Mucosa of descending colon (tissue), 3 donors: ENCODE measurements at regions of chr12 and their contacts with region 1.

Region 1: DNA sequence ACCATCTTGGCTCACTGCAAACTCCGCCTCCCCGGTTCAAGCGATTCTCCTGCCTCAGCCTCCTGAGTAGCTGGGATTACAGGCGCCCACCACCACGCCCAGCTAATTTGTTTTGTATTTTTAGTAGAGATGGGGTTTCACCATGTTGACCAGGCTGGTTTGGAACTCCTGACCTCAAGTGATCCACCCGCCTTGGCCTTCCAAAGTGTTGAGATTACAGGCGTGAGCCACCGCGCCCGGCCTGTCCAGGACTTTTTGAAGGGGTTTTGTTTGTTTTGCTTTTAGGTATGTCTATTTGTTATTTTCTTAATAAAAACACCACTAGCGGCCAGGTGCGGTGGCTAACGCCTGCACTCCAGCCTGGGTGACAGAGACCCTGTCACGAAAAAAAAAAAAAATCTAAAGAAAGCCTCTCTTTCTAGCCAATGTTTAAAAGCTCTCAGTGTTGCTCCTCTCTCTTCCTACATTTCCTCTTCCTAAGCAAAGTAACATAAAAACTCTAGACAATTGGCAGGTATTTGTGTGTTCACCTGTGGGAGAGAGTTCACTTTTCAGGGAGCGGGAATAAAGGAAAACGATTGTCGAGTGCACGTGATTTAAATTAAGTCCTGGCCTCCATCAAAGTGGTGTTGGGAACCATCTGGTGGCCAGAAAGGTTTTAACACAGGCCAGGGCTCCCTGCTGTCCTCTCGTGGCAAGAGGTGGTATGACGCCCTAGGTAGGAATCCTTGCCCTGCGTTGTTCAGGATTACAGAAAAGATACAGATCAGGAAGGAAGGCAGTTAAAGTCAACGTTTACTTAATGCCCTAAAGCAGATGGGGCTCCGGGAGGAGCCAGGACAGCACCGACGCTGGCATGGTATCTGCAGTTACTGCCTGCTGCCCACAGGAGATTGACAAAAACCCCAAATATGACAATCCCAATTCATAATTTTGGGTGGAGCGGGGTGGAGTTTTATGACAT is 36.2 kb upstream of the ATP23 start:
- DNase-seq: peak; percentile 81 to 96 (median 93)
- ATAC-seq: peak; percentile 100
- H3K4me3 ChIP-seq: no peak overlapping the region
- H3K4me1 ChIP-seq: peaks cover 12% of the 10 kb centered on the region
- CTCF ChIP-seq: peak; percentile 99

Region 2: DNA sequence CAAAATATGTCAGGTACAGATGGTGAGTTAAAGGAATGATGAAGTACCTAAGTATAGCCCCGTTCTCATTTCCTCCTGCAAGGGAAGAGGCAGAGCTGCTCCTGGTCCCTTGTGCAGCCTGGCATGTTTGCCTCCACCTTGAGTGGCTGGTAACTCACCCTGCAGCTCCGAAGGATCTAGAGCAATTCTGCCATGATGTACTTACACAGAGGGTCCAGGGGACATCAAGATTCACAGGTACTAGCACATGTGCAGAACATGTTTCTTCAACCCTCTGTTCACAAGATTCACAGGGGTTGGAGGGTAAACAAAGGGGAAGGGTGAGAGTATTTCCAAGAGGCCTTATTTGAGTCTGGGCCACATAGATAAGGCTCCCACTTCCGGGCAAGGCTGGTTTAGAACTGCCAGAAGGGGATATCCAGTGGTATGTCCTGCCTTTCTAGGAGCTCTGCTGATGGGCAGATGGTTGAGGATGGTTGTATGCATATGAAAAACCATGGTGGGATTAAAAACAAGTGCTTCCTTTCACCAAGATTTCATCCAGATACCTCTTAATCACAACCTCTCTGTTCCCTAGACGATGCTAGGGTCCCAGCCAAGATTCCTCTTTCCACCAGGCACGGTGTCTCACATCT is 365.9 kb before region 1 on chr12:
- intact Hi-C with region 1: no loop called
- DNase-seq: no peak
- ATAC-seq: no peak
- H3K4me3 ChIP-seq: no peak overlapping the region
- H3K4me1 ChIP-seq: peaks cover 23% of the 10 kb centered on the region
- CTCF ChIP-seq: no peak

Region 3: GRCh38 chr12:57722716-57723629 is 182.2 kb before region 1 on chr12:
- intact Hi-C with region 1: no loop called
- DNase-seq: peak in 1 of 3 donors; percentile 26
- ATAC-seq: no peak
- H3K4me3 ChIP-seq: no peak overlapping the region
- H3K4me1 ChIP-seq: peaks cover 3% of the 10 kb centered on the region
- CTCF ChIP-seq: no peak

Region 4: GRCh38 chr12:57803319-57803893 is 101.7 kb before region 1 on chr12:
- intact Hi-C with region 1: loop called in 1 of 2 experiments (anchors 10 kb)
- DNase-seq: peak in 2 of 3 donors; percentile 42 to 65
- ATAC-seq: peak; percentile 83
- H3K4me3 ChIP-seq: no peak overlapping the region
- H3K4me1 ChIP-seq: no peaks in the 10 kb centered on the region
- CTCF ChIP-seq: peak; percentile 59

Region 5: GRCh38 chr12:57836442-57837375 is 68.4 kb before region 1 on chr12:
- intact Hi-C with region 1: loop called in 1 of 2 experiments (anchors 5 kb)
- DNase-seq: peak; percentile 68 to 76 (median 69)
- ATAC-seq: peak; percentile 62
- H3K4me3 ChIP-seq: no peak overlapping the region
- H3K4me1 ChIP-seq: peaks cover 93% of the 10 kb centered on the region
- CTCF ChIP-seq: no peak

Region 6: DNA sequence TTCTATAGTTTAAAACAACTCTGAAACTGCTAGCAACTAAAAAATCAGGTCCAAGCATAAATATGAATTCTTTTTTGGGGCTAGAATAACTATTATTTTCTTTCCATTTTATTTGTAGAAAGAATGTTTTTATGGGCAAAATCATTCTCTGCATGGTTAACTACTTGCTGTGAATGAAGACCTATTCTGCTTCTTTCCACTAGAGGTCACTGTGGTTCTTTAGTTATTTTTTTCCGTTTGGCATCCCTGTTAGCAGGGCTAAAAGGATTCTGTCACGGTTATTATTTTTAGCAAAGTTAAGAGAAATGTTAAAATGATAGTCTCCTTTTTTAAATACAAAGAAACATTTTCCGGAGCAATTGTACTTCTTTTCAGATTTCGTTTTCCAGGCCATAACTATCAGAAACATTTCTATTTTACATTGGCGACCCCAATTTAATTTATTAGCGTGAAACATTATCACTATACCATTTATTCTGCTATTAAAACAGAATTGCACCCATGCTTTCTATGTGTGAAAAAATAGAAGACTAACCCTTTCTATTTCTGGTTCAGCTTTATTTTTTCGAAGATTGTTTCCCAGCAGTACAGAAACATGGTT is 441.0 kb after region 1 on chr12:
- intact Hi-C with region 1: no loop called
- DNase-seq: no peak
- ATAC-seq: peak; percentile 52
- H3K4me3 ChIP-seq: no peak overlapping the region
- H3K4me1 ChIP-seq: no peaks in the 10 kb centered on the region
- CTCF ChIP-seq: peak; percentile 68